HEK293T (cell line): ENCODE measurements at regions of chr5 and their contacts with region 1.

Region 1: GRCh38 chr5:140700177-140701144 is at the start of gene ZMAT2:
- DNase-seq: peak; percentile 95

Region 2: GRCh38 chr5:140524003-140524402 is 176.5 kb before region 1 on chr5:
- CTCF ChIA-PET with region 1: no interaction called
- POLR2A ChIA-PET with region 1: no interaction called
- DNase-seq: no peak

Region 3: DNA sequence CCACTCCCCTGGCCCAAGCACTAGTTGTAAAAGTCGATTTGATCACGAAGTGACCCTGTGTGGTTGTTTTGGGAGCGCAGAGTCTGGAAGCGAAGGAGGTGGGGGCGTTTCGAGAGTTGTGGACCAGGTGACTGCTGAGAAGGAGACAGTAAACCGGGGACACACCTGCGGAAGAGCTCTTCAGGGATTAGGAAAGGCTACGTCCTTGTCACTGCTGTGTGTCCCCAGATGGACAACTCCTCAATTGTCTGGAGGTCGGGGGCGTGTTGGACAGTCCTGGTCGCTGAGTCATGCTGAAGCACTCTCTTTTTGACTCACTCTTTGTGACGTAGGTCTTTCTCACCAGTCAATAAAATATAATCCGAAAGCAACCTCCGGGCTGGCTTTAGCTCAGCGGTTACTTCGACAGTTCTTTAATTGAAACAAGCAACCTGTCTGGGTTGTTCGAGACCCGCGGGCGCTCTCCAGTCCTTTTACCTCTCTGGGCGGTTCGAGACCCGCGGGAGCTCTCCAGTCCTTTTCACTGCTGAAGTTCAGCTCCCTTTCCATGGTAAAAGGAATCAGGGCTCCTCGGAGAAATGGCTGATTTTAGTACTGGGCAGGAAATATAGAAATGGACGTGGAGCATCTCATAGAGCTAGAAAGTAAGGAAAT is 10.6 kb after region 1 on chr5:
- CTCF ChIA-PET with region 1: no interaction called
- POLR2A ChIA-PET with region 1: interaction called, 22 read pairs
- DNase-seq: peak; percentile 73

Region 4: GRCh38 chr5:140725799-140726471 is 25.5 kb after region 1 on chr5:
- CTCF ChIA-PET with region 1: no interaction called
- POLR2A ChIA-PET with region 1: no interaction called
- DNase-seq: peak; percentile 69

Region 5: GRCh38 chr5:140737486-140737885 is 37.0 kb after region 1 on chr5:
- CTCF ChIA-PET with region 1: no interaction called
- POLR2A ChIA-PET with region 1: no interaction called
- DNase-seq: no peak